ENCODE measurements at regions of chr2 and their contacts with region 1.

Region 1: DNA sequence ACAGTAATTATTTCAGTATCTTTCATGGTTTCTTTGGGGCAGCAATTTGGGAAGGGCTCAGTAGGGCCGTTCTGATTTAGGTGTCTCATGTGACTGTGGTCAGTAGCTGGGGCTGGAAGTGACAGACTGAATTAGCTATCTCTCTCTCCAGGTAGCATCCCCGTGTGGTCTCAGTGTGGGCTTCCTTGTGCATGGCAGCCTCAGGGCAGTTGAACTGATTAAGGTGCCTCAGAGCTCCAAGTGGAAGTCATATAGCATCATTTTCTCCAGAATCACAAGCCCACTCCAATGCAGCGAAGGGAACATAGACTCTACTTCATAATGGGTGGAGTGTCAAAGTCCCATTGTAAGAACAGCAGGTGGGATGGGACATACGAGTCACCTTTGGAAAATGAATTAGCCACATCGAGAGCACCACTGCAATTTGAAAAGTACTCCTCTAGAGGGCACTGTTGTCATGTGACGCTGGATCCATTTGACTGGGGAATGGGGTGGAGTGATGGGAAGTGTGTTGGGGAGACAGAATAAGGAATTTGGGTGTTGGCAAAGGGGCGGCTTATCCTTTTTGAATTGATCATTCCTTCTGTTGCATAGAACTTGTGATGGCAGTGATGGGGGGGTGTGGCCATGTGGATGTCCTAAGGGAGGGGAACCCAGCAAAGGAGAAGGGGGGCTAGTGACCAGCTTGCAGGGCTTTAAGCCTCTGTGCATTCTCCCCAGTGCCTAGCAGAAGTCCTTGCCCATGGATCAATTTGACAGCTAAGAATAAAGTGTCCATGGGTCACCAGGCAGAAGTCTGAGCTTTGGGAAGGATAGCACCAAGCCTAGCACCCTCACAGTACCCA is 39.3 kb upstream of the FAM136A start:
- DNase-seq: peak; percentile 58 to 70
- H3K4me3 ChIP-seq: no peak overlapping the region
- H3K4me3 Mint-ChIP-seq: no peak overlapping the region
- H3K27ac Mint-ChIP-seq: no peak overlapping the region
- H3K4me1 ChIP-seq: no peaks in the 10 kb centered on the region
- H3K4me1 Mint-ChIP-seq: no peaks in the 10 kb centered on the region
- H3K27me3 ChIP-seq: peaks cover 2% of the 10 kb centered on the region; the same call in 1 of the 2 replicates
- H3K27me3 Mint-ChIP-seq: peaks cover 16% of the 10 kb centered on the region
- CTCF ChIP-seq: peak; percentile 83 to 84

Region 2: DNA sequence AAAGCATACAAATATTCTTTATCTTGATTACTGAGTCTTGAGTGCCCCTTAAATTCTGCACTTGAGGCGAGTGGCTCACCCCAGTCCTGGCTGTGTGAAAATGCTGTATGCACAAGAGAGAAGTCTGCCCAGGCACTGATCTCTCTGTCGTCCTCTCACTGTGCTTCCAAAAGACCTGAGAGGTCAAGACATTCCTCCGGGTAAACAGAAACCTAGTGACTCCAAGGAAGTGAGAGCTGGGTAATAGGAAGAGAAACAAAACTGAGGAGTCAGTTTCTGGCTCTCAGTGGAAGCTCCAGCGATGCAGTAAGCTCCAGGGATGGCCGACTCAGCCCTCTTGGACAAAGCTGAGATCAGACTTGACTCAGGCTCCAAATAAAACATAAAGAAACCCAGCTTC is 768.5 kb before region 1 on chr2:
- CTCF ChIA-PET with region 1: no interaction called
- POLR2A ChIA-PET with region 1: no interaction called
- intact Hi-C with region 1: no loop called
- DNase-seq: no peak
- H3K4me3 ChIP-seq: no peak overlapping the region
- H3K4me3 Mint-ChIP-seq: no peak overlapping the region
- H3K27ac Mint-ChIP-seq: peak overlapping the region; percentile 53
- H3K4me1 ChIP-seq: peaks cover 19% of the 10 kb centered on the region
- H3K4me1 Mint-ChIP-seq: peaks cover 23% of the 10 kb centered on the region
- H3K27me3 ChIP-seq: no peaks in the 10 kb centered on the region
- H3K27me3 Mint-ChIP-seq: no peaks in the 10 kb centered on the region
- CTCF ChIP-seq: no peak

Region 3: DNA sequence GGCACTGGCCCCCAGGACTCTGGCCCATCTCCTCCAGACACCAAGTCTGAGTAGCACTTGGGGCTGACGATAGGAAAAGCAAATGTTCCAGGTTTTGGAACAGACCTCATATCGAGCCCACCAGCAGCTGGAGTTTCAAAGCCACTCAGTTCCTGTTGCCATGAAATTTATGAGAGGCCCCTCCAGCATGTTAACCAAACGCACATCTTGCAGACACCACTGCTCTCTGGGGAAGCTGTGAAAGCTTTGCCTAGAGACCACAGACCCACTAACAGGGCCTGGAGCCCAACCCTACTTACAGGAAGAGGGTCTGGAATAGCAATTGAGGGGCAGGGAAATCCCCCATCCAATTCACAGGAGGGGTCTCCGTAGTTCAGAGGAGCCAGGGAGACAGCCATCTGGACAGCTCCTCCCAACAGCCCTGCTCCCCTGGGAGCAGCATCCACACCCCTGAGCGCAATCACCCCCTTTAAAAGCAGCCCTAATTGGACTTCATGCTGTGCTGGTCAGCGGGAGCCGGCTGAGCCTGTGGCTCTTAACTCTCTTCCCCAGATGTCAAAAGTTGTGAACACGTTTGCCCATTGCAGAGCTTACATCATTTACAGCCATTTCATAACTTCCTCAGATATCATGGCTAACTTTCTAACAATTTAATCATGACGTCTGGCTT is 131.2 kb after region 1 on chr2:
- CTCF ChIA-PET with region 1: no interaction called
- POLR2A ChIA-PET with region 1: no interaction called
- intact Hi-C with region 1: loop called (anchors 10 kb)
- DNase-seq: no peak
- H3K4me3 ChIP-seq: no peak overlapping the region
- H3K4me3 Mint-ChIP-seq: no peak overlapping the region
- H3K27ac Mint-ChIP-seq: no peak overlapping the region
- H3K4me1 ChIP-seq: peaks cover 11% of the 10 kb centered on the region; the same call in 1 of the 2 replicates
- H3K4me1 Mint-ChIP-seq: peaks cover 13% of the 10 kb centered on the region
- H3K27me3 ChIP-seq: no peaks in the 10 kb centered on the region
- H3K27me3 Mint-ChIP-seq: peaks cover 2% of the 10 kb centered on the region
- CTCF ChIP-seq: no peak

Region 4: DNA sequence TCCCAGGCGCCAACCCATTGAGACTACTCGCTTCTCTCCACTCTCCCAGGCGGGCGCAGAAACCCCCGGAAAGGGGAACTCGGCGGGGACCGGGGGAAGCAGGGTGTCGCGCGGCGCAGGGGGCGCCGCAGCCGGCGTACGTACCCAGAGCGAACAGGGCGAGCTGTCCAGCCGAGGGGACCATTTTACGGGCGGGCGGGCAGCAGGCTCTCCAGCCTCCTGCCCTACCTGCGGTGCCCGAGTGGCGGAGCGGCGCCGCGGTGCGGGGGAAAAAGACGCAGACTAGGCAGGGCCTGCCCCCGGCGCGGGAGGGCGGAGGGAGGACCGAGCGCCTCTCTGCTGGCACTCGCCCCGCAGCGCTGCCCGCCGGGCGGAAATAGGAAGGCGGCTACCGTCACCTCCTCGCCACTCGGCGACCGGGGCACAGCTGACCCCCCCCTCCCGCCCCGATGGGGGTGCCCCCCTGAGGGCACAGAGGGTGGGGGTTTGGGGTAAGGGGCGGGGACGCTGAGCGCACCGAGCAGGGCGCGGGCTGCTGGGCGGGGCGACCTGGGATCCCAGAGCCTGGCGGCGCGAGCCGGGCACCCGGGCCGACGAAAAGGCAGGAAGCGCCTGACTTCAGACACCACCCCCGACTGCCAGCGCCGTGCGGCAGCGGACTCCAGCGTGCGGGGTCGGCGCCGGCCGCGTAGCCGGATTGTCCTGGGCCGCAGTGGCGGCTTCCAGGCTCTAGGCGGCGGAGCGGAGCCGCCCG is 212.6 kb after region 1 on chr2 and contains the start of gene TGFA:
- CTCF ChIA-PET with region 1: no interaction called
- POLR2A ChIA-PET with region 1: no interaction called
- intact Hi-C with region 1: loop called (anchors 10 kb)
- DNase-seq: peak; percentile 69 to 77
- H3K4me3 ChIP-seq: peak within 1 kb of the TSS; percentile 44
- H3K4me3 Mint-ChIP-seq: peak within 1 kb of the TSS; percentile 87
- H3K27ac Mint-ChIP-seq: peak within 1 kb of the TSS; percentile 73
- H3K4me1 ChIP-seq: peaks cover 19% of the 10 kb centered on the region
- H3K4me1 Mint-ChIP-seq: peaks cover 11% of the 10 kb centered on the region
- H3K27me3 ChIP-seq: peaks cover 7% of the 10 kb centered on the region
- H3K27me3 Mint-ChIP-seq: peaks cover 28% of the 10 kb centered on the region
- CTCF ChIP-seq: peak in 1 of 2 experiments; percentile 76
- total RNA-seq, gene TGFA: 0.32 and 0.70 TPM in 2 replicates

Region 5: GRCh38 chr2:70616168-70616694 is 275.1 kb after region 1 on chr2:
- CTCF ChIA-PET with region 1: interaction called, 11 read pairs
- POLR2A ChIA-PET with region 1: no interaction called
- intact Hi-C with region 1: loop called (anchors 1 kb)
- DNase-seq: peak; percentile 12 to 43
- H3K4me3 ChIP-seq: no peak overlapping the region
- H3K4me3 Mint-ChIP-seq: no peak overlapping the region
- H3K27ac Mint-ChIP-seq: no peak overlapping the region
- H3K4me1 ChIP-seq: no peaks in the 10 kb centered on the region
- H3K4me1 Mint-ChIP-seq: no peaks in the 10 kb centered on the region
- H3K27me3 ChIP-seq: no peaks in the 10 kb centered on the region; the same call in 1 of the 2 replicates
- H3K27me3 Mint-ChIP-seq: peaks cover 19% of the 10 kb centered on the region
- CTCF ChIP-seq: no peak

Region 6: DNA sequence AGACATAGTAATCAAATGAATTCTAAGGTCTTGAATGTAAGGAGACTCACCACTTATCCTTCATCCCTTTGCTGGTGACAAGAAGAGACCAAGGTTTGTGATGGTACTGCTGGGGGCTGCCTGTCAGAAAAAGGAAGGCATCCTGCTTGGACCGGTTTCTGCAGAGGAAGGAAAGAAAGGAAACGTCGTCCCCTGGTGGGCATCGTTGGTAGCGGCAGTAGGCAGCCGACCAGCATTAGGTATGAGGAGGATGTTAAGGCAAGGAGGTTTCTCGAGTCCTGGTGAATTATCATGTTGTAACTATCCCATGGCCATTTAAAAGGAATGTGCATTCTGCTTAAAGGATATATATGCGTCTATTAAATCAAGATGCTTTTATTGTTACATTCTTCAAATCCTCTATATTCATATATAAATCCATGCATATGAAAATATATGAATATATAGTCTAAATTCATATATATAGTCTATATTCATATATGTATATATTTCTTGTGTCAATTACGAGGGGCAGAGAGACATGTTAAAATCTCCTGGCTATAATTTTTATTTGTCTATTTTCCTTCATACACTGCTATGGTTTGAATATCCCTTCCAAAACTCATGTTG is 306.8 kb after region 1 on chr2:
- CTCF ChIA-PET with region 1: no interaction called
- POLR2A ChIA-PET with region 1: no interaction called
- intact Hi-C with region 1: loop called (anchors 1 kb)
- DNase-seq: peak; percentile 72 to 83
- H3K4me3 ChIP-seq: no peak overlapping the region
- H3K4me3 Mint-ChIP-seq: no peak overlapping the region
- H3K27ac Mint-ChIP-seq: no peak overlapping the region
- H3K4me1 ChIP-seq: no peaks in the 10 kb centered on the region
- H3K4me1 Mint-ChIP-seq: no peaks in the 10 kb centered on the region
- H3K27me3 ChIP-seq: no peaks in the 10 kb centered on the region
- H3K27me3 Mint-ChIP-seq: peaks cover 12% of the 10 kb centered on the region
- CTCF ChIP-seq: peak; percentile 95 to 98